ENCODE measurements at regions of chr16 and their contacts with region 1.

Region 1: DNA sequence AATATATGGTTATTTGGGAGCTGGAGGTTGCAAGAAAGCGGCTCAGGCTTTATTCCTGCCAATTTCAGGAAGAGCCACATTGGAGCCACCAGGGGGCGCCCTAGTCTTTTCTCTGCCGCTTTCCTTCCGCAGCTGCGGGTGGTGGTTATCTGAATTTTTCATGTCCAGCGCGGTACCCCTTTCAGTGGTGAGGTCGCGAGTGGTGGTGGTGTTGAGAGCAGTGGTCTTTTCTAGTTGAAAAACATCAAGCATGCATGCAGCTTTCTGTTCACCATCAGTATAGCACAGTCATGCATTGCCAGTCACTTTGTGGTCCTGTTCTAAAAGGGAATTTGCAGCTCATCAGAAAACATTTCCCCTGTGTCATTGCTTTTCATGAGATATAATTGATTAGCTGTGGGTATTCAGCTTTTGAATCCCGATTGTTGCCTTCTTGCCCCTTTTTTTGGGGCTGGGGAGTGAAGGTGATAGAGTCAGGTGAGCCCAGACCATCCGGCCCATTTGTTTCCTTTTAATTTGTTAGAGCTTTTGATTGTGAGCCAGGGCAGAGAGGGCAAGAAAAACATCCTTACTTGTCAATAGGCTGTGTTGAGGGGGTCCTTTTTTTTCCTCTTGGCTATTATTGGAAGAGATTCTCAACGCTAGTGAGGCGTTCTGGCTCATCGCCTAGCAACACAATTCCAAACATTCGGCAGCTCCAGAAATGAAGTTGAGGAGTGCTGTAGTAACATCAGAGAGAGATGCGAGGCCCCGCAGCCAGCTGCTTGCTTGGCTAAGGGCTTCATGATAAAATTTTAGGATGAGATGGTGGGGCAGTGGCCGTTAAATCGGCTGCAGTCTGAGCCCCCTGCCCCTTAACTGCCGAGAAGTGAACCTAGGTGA is 119.0 kb downstream of the SNX29 start:
- DNase-seq: peak; percentile 30
- H3K4me3 ChIP-seq: no peak overlapping the region
- H3K27ac ChIP-seq: peak overlapping the region; percentile 39
- H3K27me3 ChIP-seq: no peaks in the 10 kb centered on the region
- CTCF ChIP-seq: peak; percentile 90

Region 2: GRCh38 chr16:11407047-11407982 is 688.2 kb before region 1 on chr16:
- CTCF ChIA-PET with region 1: interaction called, 10 read pairs
- POLR2A ChIA-PET with region 1: no interaction called
- DNase-seq: peak; percentile 39
- H3K4me3 ChIP-seq: no peak overlapping the region
- H3K27ac ChIP-seq: no peak overlapping the region
- H3K27me3 ChIP-seq: no peaks in the 10 kb centered on the region
- CTCF ChIP-seq: peak; percentile 75

Region 3: GRCh38 chr16:11757671-11758545 is 337.6 kb before region 1 on chr16:
- CTCF ChIA-PET with region 1: no interaction called
- POLR2A ChIA-PET with region 1: no interaction called
- DNase-seq: peak; percentile 26
- H3K4me3 ChIP-seq: no peak overlapping the region
- H3K27ac ChIP-seq: peak overlapping the region; percentile 11
- H3K27me3 ChIP-seq: no peaks in the 10 kb centered on the region
- CTCF ChIP-seq: no peak

Region 4: GRCh38 chr16:12132850-12133440 is 37.4 kb after region 1 on chr16:
- CTCF ChIA-PET with region 1: interaction called, 12 read pairs
- POLR2A ChIA-PET with region 1: no interaction called
- DNase-seq: no peak
- H3K4me3 ChIP-seq: no peak overlapping the region
- H3K27ac ChIP-seq: no peak overlapping the region
- H3K27me3 ChIP-seq: no peaks in the 10 kb centered on the region
- CTCF ChIP-seq: no peak

Region 5: DNA sequence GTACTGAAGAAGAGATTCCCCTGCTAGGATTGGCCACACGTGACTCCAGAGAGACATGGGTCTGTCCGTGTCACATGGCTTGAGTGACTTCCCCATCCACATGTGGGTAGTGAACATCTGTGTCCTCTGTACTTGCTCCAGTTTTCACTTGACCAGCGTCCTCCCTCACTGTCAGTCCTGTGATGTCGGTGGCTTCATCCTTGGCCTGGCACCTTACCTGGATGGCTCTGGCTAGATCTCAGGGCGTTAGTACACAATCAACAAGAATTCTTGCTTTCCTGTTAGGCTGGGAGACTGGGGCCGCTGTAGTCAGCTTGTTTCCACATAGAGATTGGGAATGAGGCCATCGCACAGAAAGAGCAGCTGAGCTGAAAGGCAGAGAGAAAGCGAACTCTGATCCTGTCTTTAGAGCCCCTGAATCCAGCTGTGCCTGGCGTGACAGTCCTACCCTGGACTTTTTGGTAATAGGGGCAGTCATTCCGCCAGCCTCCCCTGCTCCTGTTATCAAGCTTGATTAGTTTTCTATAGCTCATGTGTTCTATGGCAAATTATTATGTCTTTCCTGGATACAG is 108.3 kb after region 1 on chr16:
- CTCF ChIA-PET with region 1: interaction called, 14 read pairs
- POLR2A ChIA-PET with region 1: no interaction called
- DNase-seq: no peak
- H3K4me3 ChIP-seq: no peak overlapping the region
- H3K27ac ChIP-seq: no peak overlapping the region
- H3K27me3 ChIP-seq: no peaks in the 10 kb centered on the region
- CTCF ChIP-seq: no peak

Region 6: GRCh38 chr16:12257926-12258561 is 162.5 kb after region 1 on chr16:
- CTCF ChIA-PET with region 1: interaction called, 46 read pairs
- POLR2A ChIA-PET with region 1: no interaction called
- DNase-seq: no peak
- H3K4me3 ChIP-seq: no peak overlapping the region
- H3K27ac ChIP-seq: no peak overlapping the region
- H3K27me3 ChIP-seq: no peaks in the 10 kb centered on the region
- CTCF ChIP-seq: no peak

Region 7: GRCh38 chr16:12295395-12295794 is 199.9 kb after region 1 on chr16:
- CTCF ChIA-PET with region 1: no interaction called
- POLR2A ChIA-PET with region 1: no interaction called
- DNase-seq: no peak
- H3K4me3 ChIP-seq: no peak overlapping the region
- H3K27ac ChIP-seq: no peak overlapping the region
- H3K27me3 ChIP-seq: no peaks in the 10 kb centered on the region
- CTCF ChIP-seq: no peak

Region 8: GRCh38 chr16:12340151-12340733 is 244.7 kb after region 1 on chr16:
- CTCF ChIA-PET with region 1: interaction called, 14 read pairs
- POLR2A ChIA-PET with region 1: no interaction called
- DNase-seq: no peak
- H3K4me3 ChIP-seq: no peak overlapping the region
- H3K27ac ChIP-seq: peak overlapping the region; percentile 65
- H3K27me3 ChIP-seq: no peaks in the 10 kb centered on the region
- CTCF ChIP-seq: peak; percentile 48